ENCODE measurements at regions of chr13 and their contacts with region 1.

Region 1: DNA sequence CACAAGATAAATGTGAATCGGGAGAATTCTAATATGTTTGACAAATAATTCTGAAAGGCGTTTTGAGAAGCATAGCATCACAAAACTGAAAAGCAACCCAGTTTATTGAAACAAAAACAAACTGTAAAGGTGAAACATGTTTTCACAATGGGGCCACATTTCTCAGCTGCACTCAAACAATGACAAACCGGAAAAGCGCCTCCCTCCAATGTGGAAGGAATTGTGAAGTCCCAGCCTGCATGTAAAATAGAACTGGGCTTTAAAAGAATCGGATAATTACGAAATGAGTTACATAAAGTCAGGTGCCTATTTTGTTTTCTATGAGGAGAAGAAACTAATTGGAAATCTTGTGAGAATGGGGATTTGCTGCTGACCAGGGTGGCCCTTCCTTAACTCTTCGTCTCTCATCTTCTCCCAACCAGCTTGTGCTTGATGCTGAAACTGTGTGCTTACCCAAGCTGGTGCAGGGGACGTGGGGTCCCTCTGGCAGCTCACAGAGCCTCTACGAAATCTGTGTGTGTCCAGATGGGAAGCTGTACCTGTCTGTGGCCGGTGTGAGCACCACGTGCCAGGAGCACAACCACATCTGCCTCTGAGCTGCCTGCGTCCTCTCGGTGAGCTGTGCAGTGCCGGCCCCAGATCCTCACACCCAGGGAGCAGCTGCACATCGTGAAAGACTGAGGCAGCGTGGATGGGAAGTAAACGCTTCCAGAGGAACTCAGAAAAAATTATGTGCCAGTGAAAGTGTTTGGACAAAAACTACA is 109.4 kb downstream of the SACS start:
- DNase-seq: no peak
- ATAC-seq: peak in 1 of 8 donors; percentile 39
- H3K4me3 ChIP-seq: no peak overlapping the region
- H3K27ac ChIP-seq: no peak overlapping the region
- H3K4me1 ChIP-seq: peaks cover 0 to 32% (median 13%) of the 10 kb centered on the region in 9 donors
- H3K27me3 ChIP-seq: no peaks in the 10 kb centered on the region
- CTCF ChIP-seq: no peak

Region 2: GRCh38 chr13:22154046-22154445 is 1170.1 kb before region 1 on chr13:
- intact Hi-C with region 1: loop called in 1 of 10 experiments (anchors 5 kb)
- DNase-seq: no peak
- ATAC-seq: no peak
- H3K4me3 ChIP-seq: no peak overlapping the region
- H3K27ac ChIP-seq: no peak overlapping the region
- H3K4me1 ChIP-seq: no peaks in the 10 kb centered on the region
- H3K27me3 ChIP-seq: no peaks in the 10 kb centered on the region
- CTCF ChIP-seq: no peak

Region 3: DNA sequence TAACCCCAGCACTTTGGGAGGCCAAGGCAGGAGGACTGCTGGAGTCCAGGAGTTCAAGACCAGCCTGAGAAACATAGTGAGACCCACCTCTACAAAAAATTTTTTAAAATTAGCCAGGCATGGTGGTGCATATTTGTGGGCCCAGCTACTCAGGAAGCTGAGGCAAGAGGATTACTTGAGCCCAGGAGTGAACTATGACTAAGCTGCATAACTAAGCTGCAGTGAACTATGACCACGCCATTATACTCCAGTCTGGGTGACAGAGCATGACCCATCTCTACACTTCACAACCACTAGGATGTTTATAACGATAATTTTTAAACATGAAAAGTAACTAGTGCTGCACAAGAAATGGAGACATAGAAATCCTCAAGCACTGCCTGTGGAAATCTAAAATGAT is 496.0 kb before region 1 on chr13:
- intact Hi-C with region 1: no loop called
- DNase-seq: no peak
- ATAC-seq: no peak
- H3K4me3 ChIP-seq: no peak overlapping the region
- H3K27ac ChIP-seq: no peak overlapping the region
- H3K4me1 ChIP-seq: no peaks in the 10 kb centered on the region
- H3K27me3 ChIP-seq: peaks cover 0 to 5% (median 0%) of the 10 kb centered on the region in 7 donors
- CTCF ChIP-seq: no peak

Region 4: DNA sequence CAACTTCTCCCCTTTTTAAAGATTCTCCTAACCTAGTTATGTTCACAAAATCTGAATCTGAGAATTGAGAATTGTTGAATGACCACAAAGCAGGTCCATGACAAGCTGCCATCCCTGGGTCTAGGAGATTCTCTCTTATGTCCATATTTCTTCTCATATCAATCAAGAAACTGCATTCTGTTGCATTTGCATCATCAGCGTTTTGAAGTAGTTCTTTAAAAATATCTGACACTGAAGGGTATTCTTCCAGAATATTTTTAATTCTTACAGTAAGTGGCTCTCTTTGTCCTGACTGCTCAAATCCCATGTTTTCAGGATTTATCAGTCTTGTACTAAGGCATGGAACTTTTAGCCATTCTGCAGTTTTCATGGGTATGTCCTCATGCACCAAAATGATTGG is 15.1 kb after region 1 on chr13:
- intact Hi-C with region 1: loop called in 1 of 10 experiments (anchors 1 kb)
- DNase-seq: no peak
- ATAC-seq: no peak
- H3K4me3 ChIP-seq: no peak overlapping the region
- H3K27ac ChIP-seq: no peak overlapping the region
- H3K4me1 ChIP-seq: peaks cover 0 to 4% (median 0%) of the 10 kb centered on the region in 9 donors
- H3K27me3 ChIP-seq: no peaks in the 10 kb centered on the region
- CTCF ChIP-seq: no peak

Measured in heart right ventricle (tissue), 16 donors.